ENCODE measurements at regions of chr1 and their contacts with region 1.

Region 1: DNA sequence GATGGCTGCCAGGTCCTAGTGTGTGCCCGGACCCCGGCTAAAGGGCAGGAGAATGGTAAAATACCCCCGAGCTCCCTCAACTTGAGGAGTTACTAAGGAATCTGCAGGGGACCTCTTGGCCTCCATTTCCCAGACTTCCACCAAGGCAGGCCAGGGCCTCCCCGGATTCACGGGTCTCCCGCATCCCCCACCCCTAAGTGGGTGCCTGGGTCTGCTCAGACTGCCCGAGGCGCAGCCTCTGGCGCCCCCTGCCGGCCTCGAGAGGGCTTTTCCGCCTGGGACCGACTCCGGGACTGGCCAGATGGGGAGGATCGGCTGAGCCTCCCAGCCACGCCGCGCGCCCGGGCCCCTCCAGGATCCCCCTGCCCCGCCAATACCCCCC is 1.7 kb downstream of the PLEKHG5 start:
- DNase-seq: peak; percentile 80 to 86
- H3K4me3 ChIP-seq: peak overlapping the region; percentile 53
- H3K4me3 Mint-ChIP-seq: peak overlapping the region; percentile 88
- H3K27ac Mint-ChIP-seq: no peak overlapping the region
- H3K4me1 ChIP-seq: peaks cover 10% of the 10 kb centered on the region; the same call in 1 of the 2 replicates
- H3K4me1 Mint-ChIP-seq: peaks cover 9% of the 10 kb centered on the region
- H3K27me3 ChIP-seq: no peaks in the 10 kb centered on the region
- H3K27me3 Mint-ChIP-seq: no peaks in the 10 kb centered on the region
- CTCF ChIP-seq: peak; percentile 87 to 93

Region 2: GRCh38 chr1:6423321-6423999 is 66.3 kb before region 1 on chr1:
- CTCF ChIA-PET with region 1: interaction called, 16 read pairs
- POLR2A ChIA-PET with region 1: no interaction called
- intact Hi-C with region 1: loop called (anchors 1 kb)
- DNase-seq: peak; percentile 68 to 82
- H3K4me3 ChIP-seq: peak overlapping the region; percentile 24
- H3K4me3 Mint-ChIP-seq: peak overlapping the region; percentile 69
- H3K27ac Mint-ChIP-seq: no peak overlapping the region
- H3K4me1 ChIP-seq: peaks cover 21% of the 10 kb centered on the region
- H3K4me1 Mint-ChIP-seq: no peaks in the 10 kb centered on the region
- H3K27me3 ChIP-seq: peaks cover 1% of the 10 kb centered on the region
- H3K27me3 Mint-ChIP-seq: peaks cover 7% of the 10 kb centered on the region
- CTCF ChIP-seq: peak; percentile 70 to 85

Region 3: DNA sequence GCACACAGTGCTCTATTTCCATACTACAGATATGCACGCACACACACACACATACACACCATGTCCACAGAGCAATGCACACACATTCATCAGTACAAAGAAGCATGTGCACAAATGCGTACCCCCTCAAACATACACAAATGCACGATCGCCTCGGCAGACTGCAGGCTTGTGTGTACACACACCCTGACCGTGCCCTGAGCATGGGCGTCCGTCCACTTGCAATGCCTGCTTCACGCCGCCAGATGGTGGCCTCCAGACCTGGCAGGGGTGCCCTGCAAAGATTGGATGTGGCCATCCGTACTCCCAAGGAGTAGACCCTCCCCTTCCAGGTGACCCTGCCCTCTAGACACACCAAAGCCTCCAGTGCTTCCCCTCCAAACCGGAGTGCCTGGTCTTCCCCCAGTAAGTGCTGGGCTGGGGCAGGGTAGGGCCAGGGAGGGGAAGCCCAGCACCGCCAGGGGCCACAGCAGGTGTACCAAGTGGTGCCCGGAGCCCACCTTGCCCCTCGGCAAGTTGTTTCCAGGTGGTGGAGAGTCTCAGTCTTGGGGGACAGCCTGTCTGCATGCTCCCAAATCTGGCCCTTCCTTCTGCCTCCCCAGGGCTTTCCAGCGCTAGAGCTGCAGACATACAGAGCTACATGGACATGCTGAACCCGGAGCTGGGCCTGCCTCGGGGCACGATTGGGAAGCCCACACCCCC is 44.6 kb before region 1 on chr1:
- CTCF ChIA-PET with region 1: interaction called, 6 read pairs
- POLR2A ChIA-PET with region 1: no interaction called
- intact Hi-C with region 1: loop called (anchors 1 kb)
- DNase-seq: peak; percentile 62 to 65
- H3K4me3 ChIP-seq: no peak overlapping the region
- H3K4me3 Mint-ChIP-seq: no peak overlapping the region
- H3K27ac Mint-ChIP-seq: no peak overlapping the region
- H3K4me1 ChIP-seq: no peaks in the 10 kb centered on the region
- H3K4me1 Mint-ChIP-seq: no peaks in the 10 kb centered on the region
- H3K27me3 ChIP-seq: no peaks in the 10 kb centered on the region
- H3K27me3 Mint-ChIP-seq: no peaks in the 10 kb centered on the region
- CTCF ChIP-seq: peak; percentile 32 to 35

Region 4: DNA sequence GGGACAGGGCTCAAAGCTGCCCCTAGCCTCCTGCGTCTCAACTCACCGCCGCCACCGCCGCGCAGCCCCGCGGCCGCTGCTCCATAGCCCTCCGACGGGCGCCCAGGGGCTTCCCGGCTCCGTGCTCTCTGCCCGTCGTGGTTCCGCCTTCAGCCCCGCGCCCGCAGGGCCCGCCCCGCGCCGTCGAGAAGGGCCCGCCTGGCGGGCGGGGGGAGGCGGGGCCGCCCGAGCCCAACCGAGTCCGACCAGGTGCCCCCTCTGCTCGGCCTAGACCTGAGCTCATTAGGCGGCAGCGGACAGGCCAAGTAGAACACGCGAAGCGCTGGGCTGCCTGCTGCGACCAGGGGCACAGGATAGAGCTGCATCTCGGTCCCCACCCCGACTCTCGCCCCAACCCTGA is 23.8 kb before region 1 on chr1 and contains the start of gene TNFRSF25:
- CTCF ChIA-PET with region 1: no interaction called
- POLR2A ChIA-PET with region 1: no interaction called
- intact Hi-C with region 1: no loop called
- DNase-seq: no peak
- H3K4me3 ChIP-seq: no peak within 1 kb of the TSS
- H3K4me3 Mint-ChIP-seq: no peak within 1 kb of the TSS
- H3K27ac Mint-ChIP-seq: no peak within 1 kb of the TSS
- H3K4me1 ChIP-seq: no peaks in the 10 kb centered on the region
- H3K4me1 Mint-ChIP-seq: no peaks in the 10 kb centered on the region
- H3K27me3 ChIP-seq: no peaks in the 10 kb centered on the region
- H3K27me3 Mint-ChIP-seq: no peaks in the 10 kb centered on the region
- CTCF ChIP-seq: no peak
- total RNA-seq, gene TNFRSF25: 15.0 and 16.3 TPM in 2 replicates

Region 5: DNA sequence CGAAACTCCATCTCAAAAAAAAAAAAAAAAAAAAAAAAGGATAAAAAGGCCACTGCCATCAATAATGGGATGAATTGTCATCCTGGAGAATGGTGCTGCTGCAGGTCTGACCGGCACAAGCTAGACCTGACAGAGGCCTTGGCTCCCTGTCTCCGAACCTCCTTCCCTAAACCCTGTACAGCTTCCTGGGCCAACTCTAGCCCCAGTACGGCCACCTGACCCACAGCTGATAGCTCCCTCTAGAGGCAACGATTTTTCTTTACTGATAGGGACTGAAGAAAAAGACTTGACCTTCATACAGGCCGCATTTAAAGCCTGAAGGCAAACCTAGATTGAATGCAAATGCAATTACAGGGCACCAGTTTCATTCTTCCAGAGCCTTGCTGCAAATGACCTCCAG is 33.8 kb after region 1 on chr1:
- CTCF ChIA-PET with region 1: no interaction called
- POLR2A ChIA-PET with region 1: no interaction called
- intact Hi-C with region 1: loop called (anchors 1 kb)
- DNase-seq: peak in 1 of 2 experiments; percentile 56
- H3K4me3 ChIP-seq: no peak overlapping the region
- H3K4me3 Mint-ChIP-seq: no peak overlapping the region
- H3K27ac Mint-ChIP-seq: no peak overlapping the region
- H3K4me1 ChIP-seq: no peaks in the 10 kb centered on the region
- H3K4me1 Mint-ChIP-seq: no peaks in the 10 kb centered on the region
- H3K27me3 ChIP-seq: no peaks in the 10 kb centered on the region
- H3K27me3 Mint-ChIP-seq: no peaks in the 10 kb centered on the region
- CTCF ChIP-seq: peak in 1 of 2 experiments; percentile 39

Region 6: GRCh38 chr1:6535214-6535613 is 45.4 kb after region 1 on chr1:
- CTCF ChIA-PET with region 1: no interaction called
- POLR2A ChIA-PET with region 1: no interaction called
- intact Hi-C with region 1: no loop called
- DNase-seq: no peak
- H3K4me3 ChIP-seq: no peak overlapping the region
- H3K4me3 Mint-ChIP-seq: no peak overlapping the region
- H3K27ac Mint-ChIP-seq: no peak overlapping the region
- H3K4me1 ChIP-seq: no peaks in the 10 kb centered on the region
- H3K4me1 Mint-ChIP-seq: no peaks in the 10 kb centered on the region
- H3K27me3 ChIP-seq: no peaks in the 10 kb centered on the region
- H3K27me3 Mint-ChIP-seq: no peaks in the 10 kb centered on the region
- CTCF ChIP-seq: no peak

Region 7: GRCh38 chr1:6602669-6603237 is 113.0 kb after region 1 on chr1 and contains the start of gene KLHL21:
- CTCF ChIA-PET with region 1: no interaction called
- POLR2A ChIA-PET with region 1: no interaction called
- intact Hi-C with region 1: loop called (anchors 10 kb)
- DNase-seq: peak; percentile 86 to 90
- H3K4me3 ChIP-seq: peak within 1 kb of the TSS; percentile 56
- H3K4me3 Mint-ChIP-seq: peak within 1 kb of the TSS; percentile 96
- H3K27ac Mint-ChIP-seq: peak within 1 kb of the TSS; percentile 97
- H3K4me1 ChIP-seq: peaks cover 9% of the 10 kb centered on the region; the same call in 1 of the 2 replicates
- H3K4me1 Mint-ChIP-seq: no peaks in the 10 kb centered on the region
- H3K27me3 ChIP-seq: no peaks in the 10 kb centered on the region
- H3K27me3 Mint-ChIP-seq: no peaks in the 10 kb centered on the region
- CTCF ChIP-seq: no peak
- total RNA-seq, gene KLHL21: 21.6 and 22.4 TPM in 2 replicates

Region 8: GRCh38 chr1:6724516-6725141 is 234.8 kb after region 1 on chr1:
- CTCF ChIA-PET with region 1: no interaction called
- POLR2A ChIA-PET with region 1: no interaction called
- intact Hi-C with region 1: no loop called
- DNase-seq: peak; percentile 54 to 68
- H3K4me3 ChIP-seq: no peak overlapping the region
- H3K4me3 Mint-ChIP-seq: peak overlapping the region; percentile 40
- H3K27ac Mint-ChIP-seq: peak overlapping the region; percentile 77
- H3K4me1 ChIP-seq: peaks cover 15% of the 10 kb centered on the region
- H3K4me1 Mint-ChIP-seq: peaks cover 13% of the 10 kb centered on the region
- H3K27me3 ChIP-seq: no peaks in the 10 kb centered on the region
- H3K27me3 Mint-ChIP-seq: no peaks in the 10 kb centered on the region
- CTCF ChIP-seq: no peak